ENCODE measurements at regions of chr18 and their contacts with region 1.

Region 1: DNA sequence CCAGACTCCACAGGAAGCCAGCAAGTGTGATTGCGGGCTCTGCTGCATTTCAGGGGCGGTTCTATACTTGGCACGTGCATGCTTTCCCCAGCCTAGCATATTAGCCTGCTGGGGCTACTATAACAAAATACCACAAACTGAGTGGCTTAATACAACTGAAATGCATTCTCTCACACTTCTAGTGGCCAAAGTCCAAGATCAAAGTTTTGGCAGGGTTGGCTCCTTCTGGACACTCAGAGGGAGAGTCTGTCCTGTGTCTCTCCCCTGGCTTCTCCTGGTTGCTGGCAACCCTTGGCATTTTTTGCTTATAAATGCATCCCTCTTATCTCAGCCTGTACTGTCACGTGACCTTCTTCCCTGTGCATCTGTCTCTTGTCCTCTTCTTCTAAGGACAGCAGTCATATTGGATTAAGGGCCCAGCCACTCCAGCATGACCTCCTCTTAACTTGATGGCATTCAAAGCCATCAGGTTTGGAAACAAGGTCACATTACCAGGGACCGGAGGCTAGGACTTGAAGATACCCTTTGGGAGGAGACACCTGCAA is 138.7 kb downstream of the RNF152 start:
- DNase-seq: no peak
- ATAC-seq: no peak
- H3K4me3 ChIP-seq: no peak overlapping the region
- H3K27ac ChIP-seq: no peak overlapping the region
- H3K4me1 ChIP-seq: no peaks in the 10 kb centered on the region
- H3K27me3 ChIP-seq: no peaks in the 10 kb centered on the region

Region 2: DNA sequence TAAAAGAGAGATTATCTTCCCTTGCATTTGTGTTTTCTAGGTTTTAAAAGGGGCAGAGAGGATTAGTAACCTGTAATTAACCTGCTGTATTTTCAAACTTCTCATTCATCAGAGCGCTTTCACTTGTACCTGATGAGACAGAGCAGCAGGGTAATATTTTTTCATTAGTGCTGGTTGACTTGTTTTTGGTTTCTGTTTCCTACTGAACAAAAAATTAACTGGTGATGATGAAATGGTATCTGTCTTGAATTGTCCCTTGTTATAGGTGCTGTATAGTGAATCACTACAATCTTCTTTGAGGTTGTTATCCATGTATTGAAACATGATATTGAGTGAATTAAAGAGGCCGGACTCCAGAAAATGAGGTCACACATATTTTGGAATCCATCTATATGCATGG is 383.0 kb before region 1 on chr18:
- intact Hi-C with region 1: no loop called
- DNase-seq: no peak
- ATAC-seq: no peak
- H3K4me3 ChIP-seq: no peak overlapping the region
- H3K27ac ChIP-seq: no peak overlapping the region
- H3K4me1 ChIP-seq: no peaks in the 10 kb centered on the region
- H3K27me3 ChIP-seq: no peaks in the 10 kb centered on the region

Region 3: DNA sequence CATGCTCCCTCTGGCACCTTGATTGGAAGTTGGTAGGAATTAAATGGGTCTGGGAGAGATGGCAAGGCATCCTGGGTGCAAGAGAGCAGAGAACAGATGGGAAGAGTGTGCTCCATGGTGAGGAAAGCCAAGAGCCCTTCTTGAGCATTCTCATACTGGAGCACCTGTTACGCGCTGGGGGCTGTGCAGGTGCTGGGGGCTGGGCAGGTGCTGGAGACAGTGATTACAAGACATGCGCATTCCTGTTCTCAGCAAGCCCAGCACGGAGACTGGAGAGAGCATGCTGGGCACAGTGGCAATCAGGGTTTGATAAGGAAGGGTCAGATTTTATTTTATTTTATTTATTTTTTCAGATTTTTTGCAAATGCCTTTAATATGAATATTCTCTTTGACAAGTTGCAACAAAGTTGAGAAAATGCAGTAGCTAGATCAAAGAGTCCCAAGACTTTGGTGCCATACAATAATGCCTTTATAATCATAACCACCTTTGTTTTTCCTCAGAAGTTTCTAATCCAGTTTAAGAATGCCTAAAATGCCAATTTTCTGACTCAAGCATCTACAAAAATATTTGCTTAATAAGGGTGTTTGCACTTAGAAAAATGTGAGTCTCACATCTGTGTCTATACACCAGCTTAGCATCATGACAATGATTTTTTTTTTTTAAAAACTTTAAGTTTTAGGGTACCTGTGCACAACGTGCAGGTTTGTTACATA is 54.6 kb before region 1 on chr18:
- intact Hi-C with region 1: loop called in 1 of 4 experiments (anchors 10 kb)
- DNase-seq: peak in 1 of 3 donors; percentile 21
- ATAC-seq: no peak
- H3K4me3 ChIP-seq: no peak overlapping the region
- H3K27ac ChIP-seq: no peak overlapping the region
- H3K4me1 ChIP-seq: no peaks in the 10 kb centered on the region
- H3K27me3 ChIP-seq: no peaks in the 10 kb centered on the region

Region 4: DNA sequence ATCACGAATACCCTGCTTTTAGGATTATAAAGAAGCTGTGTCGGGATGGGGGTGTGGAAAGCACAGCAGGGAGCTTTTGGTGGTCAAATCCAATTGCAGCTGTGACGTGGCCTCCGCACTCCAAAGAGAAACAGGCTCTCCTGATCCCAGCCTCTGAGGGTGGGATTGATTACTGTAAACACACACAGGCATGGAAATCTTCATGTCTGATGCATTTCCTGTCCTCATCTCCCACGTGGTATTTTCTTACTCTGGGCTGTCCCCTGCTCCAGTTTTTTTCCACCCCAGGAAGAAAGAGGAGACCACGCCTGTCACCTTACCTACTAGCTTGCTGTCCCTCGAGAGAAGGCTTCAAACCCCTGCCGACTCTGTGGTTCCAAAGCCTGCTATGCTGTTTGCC is 116.0 kb after region 1 on chr18:
- intact Hi-C with region 1: loop called in 1 of 4 experiments (anchors 10 kb)
- DNase-seq: peak in 1 of 3 donors; percentile 38
- ATAC-seq: peak in 1 of 2 donors; percentile 60
- H3K4me3 ChIP-seq: no peak overlapping the region
- H3K27ac ChIP-seq: no peak overlapping the region
- H3K4me1 ChIP-seq: peaks cover 4% of the 10 kb centered on the region
- H3K27me3 ChIP-seq: no peaks in the 10 kb centered on the region

Measured in right cardiac atrium (tissue), 5 donors.